ENCODE measurements at regions of chr11 and their contacts with region 1.

Region 1: DNA sequence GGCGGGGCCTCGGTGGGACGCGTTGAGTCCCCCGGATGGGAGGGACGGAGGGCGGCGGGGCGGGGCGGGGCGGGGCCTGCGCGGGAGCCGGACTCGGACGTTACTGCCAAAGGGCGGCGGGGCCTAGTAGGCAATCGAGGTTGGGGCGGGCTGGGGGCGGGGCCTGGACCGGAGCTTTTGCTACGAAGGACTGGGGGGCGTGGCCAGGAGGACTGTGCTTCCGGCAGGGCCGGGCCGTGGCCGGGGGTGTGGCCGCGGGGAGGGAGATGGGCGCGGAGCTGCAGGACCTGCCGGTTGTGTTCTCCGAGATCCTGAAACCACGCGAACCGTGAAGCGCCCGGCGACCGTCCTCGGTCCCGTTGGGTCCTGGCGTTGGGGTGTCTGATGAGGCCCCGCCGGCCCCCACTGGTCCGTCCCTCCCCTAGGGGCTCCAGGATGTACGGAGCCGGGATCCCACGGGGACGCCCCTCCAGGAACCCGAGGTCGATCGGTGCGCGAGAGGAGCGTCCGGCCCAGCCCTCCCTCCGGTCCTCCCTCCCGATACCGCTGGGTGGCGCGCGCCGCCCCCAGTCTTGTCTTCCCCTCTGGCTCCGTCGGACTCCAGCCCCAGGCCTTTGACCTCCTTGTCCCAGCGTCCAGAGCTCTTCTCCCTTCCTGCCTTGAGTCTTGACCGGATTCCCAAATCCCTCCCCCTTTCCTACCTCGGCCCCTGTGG is 648 bp upstream of the NUDT8 start:
- DNase-seq: peak; percentile 67
- ATAC-seq: peak; percentile 87
- H3K4me3 ChIP-seq: peak overlapping the region; percentile 71 to 73
- H3K27ac ChIP-seq: peak overlapping the region; percentile 44
- H3K4me1 ChIP-seq: peaks cover 13% of the 10 kb centered on the region; the same call in 1 of the 2 replicates
- H3K27me3 ChIP-seq: no peaks in the 10 kb centered on the region
- CTCF ChIP-seq: peak; percentile 88

Region 2: GRCh38 chr11:67651976-67652781 is 21.8 kb after region 1 on chr11:
- CTCF ChIA-PET with region 1: interaction called, 13 read pairs
- POLR2A ChIA-PET with region 1: no interaction called
- in situ Hi-C with region 1: no loop called
- intact Hi-C with region 1: no loop called
- DNase-seq: no peak
- ATAC-seq: no peak
- H3K4me3 ChIP-seq: no peak overlapping the region
- H3K27ac ChIP-seq: no peak overlapping the region
- H3K4me1 ChIP-seq: peaks cover 4% of the 10 kb centered on the region; the same call in 1 of the 2 replicates
- H3K27me3 ChIP-seq: 0 out of 2 replicates have a peak, but pooled peaks cover 2% of the 10 kb centered on the region
- CTCF ChIP-seq: no peak

Region 3: GRCh38 chr11:67658691-67659271 is 28.4 kb after region 1 on chr11:
- CTCF ChIA-PET with region 1: interaction called, 23 read pairs
- POLR2A ChIA-PET with region 1: no interaction called
- in situ Hi-C with region 1: no loop called
- intact Hi-C with region 1: no loop called
- DNase-seq: no peak
- ATAC-seq: no peak
- H3K4me3 ChIP-seq: no peak overlapping the region
- H3K27ac ChIP-seq: no peak overlapping the region
- H3K4me1 ChIP-seq: no peaks in the 10 kb centered on the region
- H3K27me3 ChIP-seq: no peaks in the 10 kb centered on the region
- CTCF ChIP-seq: no peak

Region 4: DNA sequence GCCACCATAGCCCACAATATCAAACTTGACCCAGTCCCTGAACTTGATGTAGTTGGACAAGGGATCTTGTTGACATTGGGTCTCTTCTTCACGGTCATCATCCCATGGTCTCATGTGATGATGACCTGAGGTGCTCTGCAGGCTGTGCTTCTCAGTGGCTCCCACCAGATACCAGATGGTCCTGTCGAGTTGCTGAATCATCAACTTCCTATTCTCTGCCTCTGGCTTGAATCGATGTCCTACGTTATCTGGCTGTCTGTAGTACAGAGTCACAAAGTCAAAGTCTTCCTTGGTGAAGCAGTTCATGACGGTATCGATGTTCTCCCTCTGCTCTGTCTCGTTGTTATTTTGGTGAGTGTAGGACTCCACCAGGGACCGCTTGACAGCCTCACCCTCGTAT is 189.7 kb after region 1 on chr11:
- CTCF ChIA-PET with region 1: interaction called, 19 read pairs
- POLR2A ChIA-PET with region 1: no interaction called
- in situ Hi-C with region 1: no loop called
- intact Hi-C with region 1: no loop called
- DNase-seq: no peak
- ATAC-seq: no peak
- H3K4me3 ChIP-seq: no peak overlapping the region
- H3K27ac ChIP-seq: no peak overlapping the region
- H3K4me1 ChIP-seq: no peaks in the 10 kb centered on the region
- H3K27me3 ChIP-seq: peaks cover 2% of the 10 kb centered on the region
- CTCF ChIP-seq: no peak